ENCODE measurements at regions of chr16 and their contacts with region 1.

Region 1: GRCh38 chr16:8567750-8568617 is 22.3 kb downstream of the TMEM114 start:
- DNase-seq: peak; percentile 94

Region 2: GRCh38 chr16:8797364-8798173 is 229.6 kb after region 1 on chr16 and contains the starts of genes PMM2 and TMEM186:
- in situ Hi-C with region 1: loop called (anchors 25 kb)
- DNase-seq: peak; percentile 97